ENCODE measurements at regions of chr14 and their contacts with region 1.

Region 1: DNA sequence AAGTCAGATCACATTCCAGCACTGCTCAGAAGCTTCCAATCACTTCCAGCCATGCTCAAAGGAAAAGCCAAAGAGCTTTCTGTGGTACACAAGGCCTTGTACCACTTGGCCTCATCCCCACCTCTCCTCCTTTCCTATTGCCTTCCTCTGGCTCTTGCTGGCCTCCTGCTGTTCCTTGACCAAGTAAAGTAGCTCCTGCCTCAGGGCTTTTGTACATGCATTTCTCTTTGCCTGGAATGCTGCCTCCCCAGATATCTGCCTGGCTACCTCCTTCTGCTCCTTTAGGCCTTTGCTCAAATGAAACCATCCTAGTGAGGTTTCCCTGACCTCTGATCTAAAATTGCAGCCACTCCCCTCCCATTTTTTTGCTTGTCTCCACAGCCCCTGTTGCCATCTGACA is 51.2 kb upstream of the TCL1B start:
- DNase-seq: no peak
- H3K4me3 ChIP-seq: no peak overlapping the region
- H3K27ac ChIP-seq: no peak overlapping the region
- H3K4me1 ChIP-seq: no peaks in the 10 kb centered on the region
- H3K27me3 ChIP-seq: no peaks in the 10 kb centered on the region
- CTCF ChIP-seq: no peak

Region 2: DNA sequence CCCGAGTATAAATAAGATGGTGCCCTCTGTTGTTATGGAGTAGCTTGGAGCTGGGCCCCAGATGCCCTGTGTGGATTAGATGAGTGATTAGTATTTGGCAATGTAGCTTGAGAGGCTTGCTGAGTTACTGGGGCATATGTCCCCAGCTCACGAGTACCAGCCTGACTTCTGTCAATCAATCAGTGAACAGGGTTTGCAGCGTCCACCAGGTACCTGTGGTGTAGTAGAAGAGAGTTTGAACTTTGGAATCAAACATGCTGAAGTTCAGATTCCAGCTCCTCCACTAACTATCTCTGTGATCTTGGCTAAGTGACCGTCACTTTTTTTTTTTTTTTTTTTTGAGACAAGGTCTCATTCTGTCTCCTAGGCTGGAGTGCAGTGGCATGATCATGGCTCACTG is 39.6 kb after region 1 on chr14:
- CTCF ChIA-PET with region 1: no interaction called
- dilution Hi-C with region 1: loop called (anchors 5 kb)
- in situ Hi-C with region 1: no loop called
- intact Hi-C with region 1: no loop called
- DNase-seq: no peak
- H3K4me3 ChIP-seq: no peak overlapping the region
- H3K27ac ChIP-seq: no peak overlapping the region
- H3K4me1 ChIP-seq: no peaks in the 10 kb centered on the region
- H3K27me3 ChIP-seq: no peaks in the 10 kb centered on the region
- CTCF ChIP-seq: no peak

Region 3: DNA sequence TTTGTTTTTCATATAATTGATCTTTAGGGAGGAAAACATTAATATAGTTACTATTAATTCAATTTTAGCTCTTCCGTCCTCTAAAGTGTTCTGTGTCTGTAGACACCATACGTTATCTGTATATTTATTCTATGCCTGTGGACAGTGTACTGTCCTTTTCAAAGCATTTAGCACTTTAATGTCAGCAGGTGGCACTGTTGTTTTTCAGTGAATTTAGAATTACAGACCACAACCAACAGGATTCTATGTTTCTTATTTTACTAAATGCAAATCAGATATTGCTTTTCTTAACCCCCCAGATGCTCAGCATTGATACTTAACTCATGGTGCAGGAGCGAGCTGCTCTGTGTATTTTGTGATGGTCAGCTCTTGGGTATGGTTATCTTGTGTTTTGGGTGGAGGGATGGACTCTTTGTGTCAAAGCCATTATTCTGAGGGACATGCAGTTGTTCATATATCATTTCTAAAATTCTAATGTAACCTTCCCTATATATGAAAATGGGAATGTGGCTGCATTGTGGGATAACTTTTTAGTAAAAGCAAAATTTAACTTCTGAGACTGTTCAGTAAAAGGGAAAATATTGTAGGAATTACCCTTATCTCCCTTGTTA is 932.3 kb after region 1 on chr14:
- CTCF ChIA-PET with region 1: no interaction called
- dilution Hi-C with region 1: no loop called
- in situ Hi-C with region 1: no loop called
- intact Hi-C with region 1: no loop called
- DNase-seq: no peak
- H3K4me3 ChIP-seq: no peak overlapping the region
- H3K27ac ChIP-seq: no peak overlapping the region
- H3K4me1 ChIP-seq: no peaks in the 10 kb centered on the region
- H3K27me3 ChIP-seq: no peaks in the 10 kb centered on the region
- CTCF ChIP-seq: peak; percentile 47 to 50

Measured in mammary epithelial cell (primary cell).